Dorsolateral prefrontal cortex (tissue), 120 donors: ENCODE measurements at regions of chr2 and their contacts with region 1.

Region 1: GRCh38 chr2:218406209-218406948 is 6.7 kb downstream of the CTDSP1 start:
- DNase-seq: peak; percentile 89 to 97 (median 95)
- H3K4me3 ChIP-seq: peak overlapping the region; percentile 25 to 86 (median 61)
- H3K27ac ChIP-seq: peak overlapping the region; percentile 73 to 98 (median 95)
- H3K27me3 ChIP-seq: no peaks in the 10 kb centered on the region
- CTCF ChIP-seq: peak; percentile 22 to 90 (median 79)

Region 2: DNA sequence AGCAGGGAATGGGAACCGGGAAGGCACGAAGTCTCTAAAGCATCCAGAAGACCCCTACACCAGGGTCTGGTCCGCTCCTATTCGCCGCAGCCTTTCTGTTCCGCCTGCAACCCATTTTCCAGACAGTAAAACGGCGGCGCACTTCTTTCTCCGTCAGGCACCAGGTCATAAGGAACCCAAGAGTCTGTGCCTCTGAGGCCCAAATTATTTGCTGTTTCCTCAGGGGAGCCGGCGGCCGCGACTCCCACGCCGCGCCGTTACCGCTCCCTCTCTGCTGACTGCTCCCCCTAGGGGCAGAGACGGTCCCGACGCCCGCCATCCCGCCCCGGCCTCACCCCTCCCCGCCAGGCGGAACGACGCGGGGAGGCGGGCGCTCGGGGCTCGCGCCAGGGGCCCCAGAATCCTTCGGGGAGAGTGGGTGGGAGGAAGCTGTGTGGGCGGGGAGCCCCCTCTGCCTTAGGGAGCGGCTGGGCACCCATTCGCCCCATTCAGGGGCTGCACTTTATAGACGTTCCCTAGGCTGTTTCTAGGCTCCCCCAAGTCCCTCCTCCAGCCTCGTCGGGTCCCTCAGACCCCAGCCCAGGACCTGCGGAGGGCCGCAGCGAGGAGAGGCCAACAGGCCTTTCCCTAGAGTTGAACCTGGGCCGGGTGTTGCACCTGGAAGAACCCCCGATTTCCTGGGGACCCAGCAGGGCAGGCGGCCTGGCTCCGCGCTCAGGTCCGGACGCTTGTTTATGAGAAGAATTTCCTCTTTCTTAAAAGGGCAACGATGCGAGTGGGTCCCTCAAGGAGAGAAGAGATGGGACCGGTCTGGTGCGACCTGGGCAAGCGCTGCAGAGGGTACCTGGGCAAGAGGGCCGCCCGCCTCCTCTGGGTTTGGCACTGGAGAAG is 10.3 kb before region 1 on chr2:
- intact Hi-C with region 1: loop called in 1 of 2 experiments (anchors 1 kb)
- DNase-seq: peak; percentile 84 to 96 (median 92)
- H3K4me3 ChIP-seq: peak overlapping the region; percentile 62 to 99 (median 94)
- H3K27ac ChIP-seq: peak overlapping the region; percentile 91 to 100 (median 99)
- H3K27me3 ChIP-seq: peaks cover 0 to 5% (median 0%) of the 10 kb centered on the region in 45 donors
- CTCF ChIP-seq: peak; percentile 66 to 98 (median 91)

Region 3: GRCh38 chr2:218466016-218466521 is 59.7 kb after region 1 on chr2:
- intact Hi-C with region 1: loop called (anchors 1 to 2 kb)
- DNase-seq: no peak
- H3K4me3 ChIP-seq: no peak overlapping the region
- H3K27ac ChIP-seq: peak overlapping the region in 2 of 59 donors; percentile 39 to 40
- H3K27me3 ChIP-seq: no peaks in the 10 kb centered on the region
- CTCF ChIP-seq: peak in 55 of 56 donors; percentile 22 to 76 (median 54)

Region 4: DNA sequence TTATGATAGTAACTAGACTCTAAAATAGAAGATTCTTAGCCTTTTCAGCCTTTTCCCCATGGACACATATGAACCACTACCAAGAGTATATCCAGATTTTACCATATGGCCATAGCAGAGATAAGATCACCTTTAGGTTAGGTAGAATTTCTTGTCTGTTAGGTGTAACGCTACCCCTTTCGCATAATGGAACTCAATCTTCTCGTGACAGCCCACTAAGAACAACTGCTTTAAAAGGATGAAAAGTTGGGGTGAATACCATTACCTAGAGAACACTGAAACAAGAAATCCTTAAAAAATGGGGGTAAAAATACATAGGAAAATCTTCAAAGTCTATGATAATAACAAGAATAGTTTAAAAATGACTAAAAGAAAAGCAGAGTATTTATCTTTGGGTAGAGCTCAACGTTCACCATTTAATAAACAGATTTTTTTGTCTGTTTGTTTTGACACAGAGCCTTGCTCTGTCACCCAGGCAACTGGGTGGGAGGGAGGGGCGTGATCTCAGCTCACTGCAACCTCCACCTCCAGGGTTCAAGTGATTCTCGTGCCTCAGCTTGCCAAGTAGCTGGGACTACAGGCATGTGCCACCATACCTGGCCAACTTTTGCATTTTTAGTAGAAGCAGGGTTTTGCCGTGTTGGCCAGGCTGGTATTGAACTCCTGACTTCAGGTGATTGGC is 79.7 kb after region 1 on chr2:
- intact Hi-C with region 1: no loop called
- DNase-seq: no peak
- H3K4me3 ChIP-seq: no peak overlapping the region
- H3K27ac ChIP-seq: no peak overlapping the region
- H3K27me3 ChIP-seq: no peaks in the 10 kb centered on the region
- CTCF ChIP-seq: no peak

Region 5: GRCh38 chr2:218568190-218569037 is 162.0 kb after region 1 on chr2 and contains the starts of genes CNOT9 and USP37:
- intact Hi-C with region 1: loop called (anchors 2 to 5 kb)
- DNase-seq: peak; percentile 98 to 99 (median 99)
- H3K4me3 ChIP-seq: peak within 1 kb of the TSS; percentile 69 to 99 (median 92)
- H3K27ac ChIP-seq: peak within 1 kb of the TSS; percentile 65 to 98 (median 93)
- H3K27me3 ChIP-seq: no peaks in the 10 kb centered on the region
- CTCF ChIP-seq: peak in 10 of 56 donors; percentile 4 to 32 (median 18)
- total RNA-seq, gene CNOT9: 27.4 to 52.0 (median 37.4) TPM
- total RNA-seq, gene USP37: 15.0 to 42.8 (median 26.7) TPM

Region 6: DNA sequence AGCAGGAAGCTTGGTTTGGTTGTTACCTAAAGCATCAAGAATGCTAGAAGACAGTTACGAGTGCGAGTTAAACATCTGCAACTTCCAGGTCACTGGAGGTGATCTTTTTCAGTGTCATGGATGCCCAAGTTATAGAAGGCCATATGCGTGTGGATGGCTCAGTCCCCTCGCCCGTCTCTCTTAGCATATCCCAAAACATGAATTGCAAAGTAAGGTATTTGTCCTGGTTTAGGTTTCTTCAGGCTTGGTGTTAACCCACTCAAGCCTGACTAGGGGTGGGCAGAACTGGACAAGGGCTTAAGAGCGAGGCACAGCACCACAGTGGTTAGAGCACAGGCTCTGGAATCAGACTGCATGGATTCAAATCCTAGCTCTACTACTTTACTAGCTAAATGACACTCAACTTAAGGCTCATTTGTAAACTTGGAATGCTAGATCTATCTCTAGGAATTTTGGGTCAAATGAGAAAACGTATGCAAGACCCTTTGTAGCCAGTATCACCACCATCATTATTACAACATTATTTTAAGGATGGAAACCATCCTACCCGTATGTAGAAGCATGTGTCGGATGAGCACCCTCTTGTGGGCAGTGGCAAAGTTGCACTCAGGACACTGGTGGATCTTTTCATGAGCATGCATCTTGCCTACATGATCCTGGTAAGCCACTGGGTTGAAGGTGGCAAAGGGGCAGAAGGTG is 241.9 kb after region 1 on chr2:
- intact Hi-C with region 1: loop called in 1 of 2 experiments (anchors 5 kb)
- DNase-seq: peak in 6 of 10 donors; percentile 30 to 65 (median 56)
- H3K4me3 ChIP-seq: no peak overlapping the region
- H3K27ac ChIP-seq: no peak overlapping the region
- H3K27me3 ChIP-seq: no peaks in the 10 kb centered on the region
- CTCF ChIP-seq: peak; percentile 44 to 85 (median 74)

Region 7: GRCh38 chr2:218659258-218659987 is 253.0 kb after region 1 on chr2 and contains the starts of genes BCS1L and ZNF142:
- intact Hi-C with region 1: loop called in 1 of 2 experiments (anchors 5 kb)
- DNase-seq: peak; percentile 81 to 96 (median 95)
- H3K4me3 ChIP-seq: peak within 1 kb of the TSS; percentile 68 to 99 (median 89)
- H3K27ac ChIP-seq: peak within 1 kb of the TSS in 51 of 59 donors; percentile 11 to 86 (median 66)
- H3K27me3 ChIP-seq: no peaks in the 10 kb centered on the region
- CTCF ChIP-seq: peak in 29 of 56 donors; percentile 10 to 51 (median 27)
- total RNA-seq, gene BCS1L: 21.5 to 56.6 (median 35.8) TPM
- total RNA-seq, gene ZNF142: 32.6 to 56.7 (median 43.4) TPM